ENCODE measurements at regions of chr11 and their contacts with region 1.

Region 1: GRCh38 chr11:22337596-22338485 is at the start of gene SLC17A6:
- DNase-seq: peak; percentile 59
- H3K4me3 ChIP-seq: no peak within 1 kb of the TSS
- H3K27ac ChIP-seq: no peak within 1 kb of the TSS
- H3K4me1 ChIP-seq: no peaks in the 10 kb centered on the region
- H3K27me3 ChIP-seq: peaks cover 48% of the 10 kb centered on the region
- total RNA-seq, gene SLC17A6: not detected in 2 replicates

Region 2: GRCh38 chr11:22539821-22540256 is 202.0 kb after region 1 on chr11:
- in situ Hi-C with region 1: loop called (anchors 10 kb)
- DNase-seq: peak; percentile 71
- H3K4me3 ChIP-seq: no peak overlapping the region
- H3K27ac ChIP-seq: no peak overlapping the region
- H3K4me1 ChIP-seq: peaks cover 16% of the 10 kb centered on the region
- H3K27me3 ChIP-seq: no peaks in the 10 kb centered on the region

Region 3: GRCh38 chr11:22787551-22788162 is 449.8 kb after region 1 on chr11:
- in situ Hi-C with region 1: loop called (anchors 10 kb)
- DNase-seq: peak; percentile 72
- H3K4me3 ChIP-seq: no peak overlapping the region
- H3K27ac ChIP-seq: no peak overlapping the region
- H3K4me1 ChIP-seq: peaks cover 7% of the 10 kb centered on the region; the same call in 1 of the 2 replicates
- H3K27me3 ChIP-seq: no peaks in the 10 kb centered on the region

Measured in GM23248 (cell line).